Mammary epithelial cell (primary cell): ENCODE measurements at regions of chr5 and their contacts with region 1.

Region 1: GRCh38 chr5:159850160-159850559 is 66.1 kb upstream of the ADRA1B start:
- DNase-seq: peak; percentile 90
- H3K4me3 ChIP-seq: no peak overlapping the region
- H3K27ac ChIP-seq: peak overlapping the region; percentile 49
- H3K4me1 ChIP-seq: peaks cover 25% of the 10 kb centered on the region
- H3K27me3 ChIP-seq: no peaks in the 10 kb centered on the region
- CTCF ChIP-seq: no peak

Region 2: DNA sequence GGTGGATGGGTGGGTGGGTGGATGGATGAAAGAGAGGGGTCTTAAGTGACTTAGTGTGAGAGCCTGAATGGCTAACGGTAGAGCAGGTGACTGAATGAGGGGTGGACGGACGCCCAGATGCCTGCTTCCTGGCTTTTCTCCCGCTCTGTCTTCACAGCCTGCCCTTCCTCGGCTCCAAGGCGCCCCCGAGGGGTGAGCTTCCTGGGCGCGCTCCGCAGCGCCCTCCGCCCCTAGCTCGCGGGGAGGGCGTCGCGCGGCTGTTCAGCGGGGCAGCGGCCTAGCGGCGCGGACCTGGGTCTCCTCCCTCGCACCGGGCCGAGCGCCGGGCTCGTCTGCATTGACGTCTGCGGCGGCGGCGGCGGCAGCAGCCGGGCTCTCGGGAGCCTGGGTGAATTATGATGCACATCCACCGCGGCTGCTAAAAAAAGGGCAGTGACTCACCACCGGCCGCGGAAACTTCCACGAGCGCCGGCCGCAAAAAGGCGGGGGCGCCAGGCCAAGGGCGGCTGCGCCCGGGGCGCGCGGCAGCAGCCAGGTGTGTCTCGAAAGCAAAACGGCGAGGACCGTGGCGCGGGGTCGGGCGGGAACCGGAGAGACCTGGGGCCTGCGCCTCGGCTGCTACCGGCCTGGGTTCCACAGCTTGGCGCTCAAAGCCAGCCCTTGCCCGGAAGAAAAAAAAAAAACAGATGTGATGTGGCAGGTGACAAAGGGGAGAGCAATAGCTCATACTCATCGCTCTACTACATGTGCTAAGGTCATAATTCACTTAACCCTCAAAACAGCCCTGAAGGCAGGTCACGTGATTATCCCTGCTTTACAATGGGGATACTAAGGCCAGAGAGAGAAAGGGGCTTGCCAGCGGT is 76.9 kb before region 1 on chr5:
- CTCF ChIA-PET with region 1: no interaction called
- dilution Hi-C with region 1: no loop called
- in situ Hi-C with region 1: no loop called
- intact Hi-C with region 1: loop called (anchors 2 kb)
- DNase-seq: peak; percentile 90
- H3K4me3 ChIP-seq: peak overlapping the region; percentile 16 to 45 (median 35)
- H3K27ac ChIP-seq: peak overlapping the region; percentile 41
- H3K4me1 ChIP-seq: peaks cover 10% of the 10 kb centered on the region
- H3K27me3 ChIP-seq: no peaks in the 10 kb centered on the region
- CTCF ChIP-seq: peak in 1 of 2 donors; percentile 11